BJ (cell line): ENCODE measurements at regions of chr17 and their contacts with region 1.

Region 1: DNA sequence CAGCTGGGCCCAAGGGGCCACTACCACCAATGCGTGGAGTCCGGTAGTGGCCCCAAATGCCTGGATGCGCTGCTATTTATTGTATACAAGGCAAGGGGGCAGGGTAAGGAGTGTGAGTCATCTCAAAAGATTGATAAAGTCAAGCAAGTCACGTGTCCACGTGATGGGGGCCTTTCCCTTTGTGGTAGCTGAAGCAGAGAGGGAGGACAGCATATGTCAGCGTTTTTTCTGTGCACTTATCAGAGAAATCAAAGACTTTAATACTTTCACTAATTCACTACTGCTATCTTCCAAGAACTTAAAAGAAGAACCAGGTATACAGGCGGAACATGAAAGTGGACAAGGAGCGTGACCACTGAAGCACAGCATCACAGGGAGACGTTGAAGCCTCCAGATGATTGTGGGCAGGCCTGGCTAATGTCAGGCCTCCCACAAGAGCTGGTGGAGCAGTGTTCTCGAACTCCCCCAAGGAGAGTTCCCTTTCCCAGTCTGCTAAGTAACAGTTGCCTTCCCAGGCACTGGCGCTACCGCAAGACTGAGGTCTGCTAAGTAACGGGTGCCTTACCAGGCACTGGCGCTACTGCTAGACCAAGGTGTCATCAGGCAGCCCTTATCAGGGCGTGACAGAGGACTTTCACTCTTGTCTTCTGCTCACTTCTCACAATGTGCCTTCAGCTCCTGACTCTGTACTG is 10.8 kb upstream of the ASB16 start:
- DNase-seq: no peak
- H3K4me3 ChIP-seq: no peak overlapping the region
- H3K27me3 ChIP-seq: no peaks in the 10 kb centered on the region
- CTCF ChIP-seq: no peak

Region 2: GRCh38 chr17:44132275-44132821 is 27.3 kb before region 1 on chr17:
- CTCF ChIA-PET with region 1: no interaction called
- POLR2A ChIA-PET with region 1: no interaction called
- DNase-seq: no peak
- H3K4me3 ChIP-seq: no peak overlapping the region
- H3K27me3 ChIP-seq: no peaks in the 10 kb centered on the region
- CTCF ChIP-seq: no peak

Region 3: DNA sequence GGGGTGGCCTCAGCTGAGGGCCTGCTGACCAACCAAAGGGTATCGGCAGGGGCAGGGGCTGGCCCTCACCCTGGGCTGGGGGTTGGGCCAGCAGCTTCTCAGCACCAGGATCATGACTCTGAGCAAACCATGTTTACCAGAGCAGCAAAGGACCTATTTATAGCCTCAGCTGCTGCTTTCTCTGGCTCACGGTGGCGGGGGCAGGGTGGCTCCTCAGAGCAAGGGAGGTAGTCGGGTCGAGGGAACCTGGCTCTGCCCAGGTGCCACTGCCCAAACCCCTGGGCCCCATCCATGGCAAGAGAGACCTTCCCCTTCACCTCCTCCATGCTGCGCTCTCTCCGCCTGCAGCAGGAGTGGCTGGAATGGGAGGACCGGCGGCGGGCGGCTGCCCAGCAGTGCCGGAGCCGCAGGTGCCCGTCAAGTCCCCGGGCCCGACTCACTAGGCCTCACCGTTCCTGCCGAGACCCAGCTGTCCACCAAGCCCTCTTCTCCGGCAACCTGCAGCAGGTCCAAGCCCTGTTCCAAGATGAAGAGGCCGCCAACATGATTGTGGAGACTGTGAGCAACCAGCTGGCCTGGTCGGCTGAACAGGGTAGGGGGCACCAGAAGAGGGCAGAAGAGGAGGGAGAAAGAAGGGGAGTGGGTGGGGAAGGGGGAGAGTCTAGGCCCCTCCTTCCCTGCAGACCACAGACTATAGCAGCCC is 11.0 kb after region 1 on chr17 and contains the start of gene ASB16:
- CTCF ChIA-PET with region 1: interaction called, 25 read pairs
- POLR2A ChIA-PET with region 1: interaction called, 16 read pairs
- DNase-seq: no peak
- H3K4me3 ChIP-seq: no peak within 1 kb of the TSS
- H3K27me3 ChIP-seq: no peaks in the 10 kb centered on the region
- CTCF ChIP-seq: no peak
- polyA plus RNA-seq, gene ASB16: 0.04 TPM in 1 of 2 replicates, not detected in the other

Region 4: GRCh38 chr17:44203731-44204452 is 44.2 kb after region 1 on chr17:
- CTCF ChIA-PET with region 1: no interaction called
- POLR2A ChIA-PET with region 1: no interaction called
- DNase-seq: no peak
- H3K4me3 ChIP-seq: no peak overlapping the region
- H3K27me3 ChIP-seq: no peaks in the 10 kb centered on the region
- CTCF ChIP-seq: peak; percentile 74

Region 5: GRCh38 chr17:44235583-44235936 is 75.9 kb after region 1 on chr17:
- CTCF ChIA-PET with region 1: no interaction called
- POLR2A ChIA-PET with region 1: no interaction called
- DNase-seq: no peak
- H3K4me3 ChIP-seq: no peak overlapping the region
- H3K27me3 ChIP-seq: 0 out of 2 replicates have a peak, but pooled peaks cover 2% of the 10 kb centered on the region
- CTCF ChIP-seq: no peak